Activated CD8-positive, alpha-beta T cell treated with anti-CD3 and anti-CD28 coated beads, Interleukin-2, amount 10 ng/mL, durations not matched to agents 7 days and 5 days (primary cell): ENCODE measurements at regions of chr9 and their contacts with region 1.

Region 1: DNA sequence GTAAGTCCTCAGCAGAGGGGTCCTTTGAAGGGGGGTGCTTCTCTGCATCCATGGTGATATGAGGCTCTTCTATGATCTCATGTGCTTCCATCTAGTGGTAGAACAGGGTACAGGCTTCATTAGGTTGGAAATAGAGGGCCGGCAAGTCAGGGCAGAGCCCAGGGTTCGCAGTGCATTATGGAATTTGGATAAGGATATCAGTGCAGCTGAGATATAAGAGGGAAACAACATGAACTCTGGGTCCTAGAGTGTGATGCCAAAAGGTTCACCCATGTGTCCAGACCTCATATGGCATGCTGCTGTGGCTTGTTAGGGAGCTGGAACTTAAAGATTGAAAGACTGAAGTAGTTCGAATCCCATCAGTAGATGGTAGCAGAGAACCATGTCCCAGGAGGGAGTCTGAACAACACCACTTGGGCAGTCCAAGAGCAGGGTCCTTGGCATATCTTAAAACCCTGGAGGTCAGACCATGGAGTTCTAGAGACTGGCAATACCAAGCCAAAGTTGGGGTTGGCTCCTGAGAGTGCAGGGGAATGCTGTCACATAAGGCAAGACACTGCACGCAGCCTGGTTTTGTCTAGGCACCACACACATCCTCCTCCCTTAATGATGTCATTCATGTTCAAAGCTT is 2.3 kb downstream of the FAM221B start:
- DNase-seq: peak; percentile 58
- ATAC-seq: peak; percentile 29
- H3K4me3 Mint-ChIP-seq: no peak overlapping the region
- H3K27ac Mint-ChIP-seq: no peak overlapping the region
- H3K4me1 Mint-ChIP-seq: peaks cover 27% of the 10 kb centered on the region
- H3K27me3 Mint-ChIP-seq: peaks cover 14% of the 10 kb centered on the region

Region 2: DNA sequence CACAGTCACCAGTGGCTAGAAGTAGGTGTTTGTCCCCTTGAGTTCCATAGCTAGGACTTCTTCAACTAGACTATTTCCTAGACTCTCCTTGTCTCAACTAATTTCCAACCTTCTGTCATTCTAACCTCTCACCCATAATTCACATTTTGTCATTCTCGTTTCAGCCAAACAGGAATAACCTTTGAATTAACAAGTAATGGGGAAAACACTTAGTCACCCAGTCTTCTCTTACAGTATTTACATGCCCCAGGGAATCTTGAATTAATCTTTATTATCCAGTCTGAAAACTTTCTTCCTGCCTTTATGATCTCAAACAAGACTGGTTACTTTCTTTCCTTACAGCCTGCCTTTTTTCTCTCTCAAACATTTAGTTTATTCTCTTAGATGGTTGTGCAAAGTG is 399.6 kb before region 1 on chr9:
- CTCF ChIA-PET with region 1: no interaction called
- POLR2A ChIA-PET with region 1: no interaction called
- DNase-seq: no peak
- ATAC-seq: no peak
- H3K4me3 Mint-ChIP-seq: no peak overlapping the region
- H3K27ac Mint-ChIP-seq: no peak overlapping the region
- H3K4me1 Mint-ChIP-seq: no peaks in the 10 kb centered on the region
- H3K27me3 Mint-ChIP-seq: peaks cover 36% of the 10 kb centered on the region

Region 3: GRCh38 chr9:35756275-35757225 is 69.6 kb before region 1 on chr9:
- CTCF ChIA-PET with region 1: interaction called, 11 read pairs
- POLR2A ChIA-PET with region 1: no interaction called
- DNase-seq: peak; percentile 87
- ATAC-seq: peak; percentile 87
- H3K4me3 Mint-ChIP-seq: peak overlapping the region; percentile 87
- H3K27ac Mint-ChIP-seq: peak overlapping the region; percentile 94
- H3K4me1 Mint-ChIP-seq: peaks cover 35% of the 10 kb centered on the region
- H3K27me3 Mint-ChIP-seq: no peaks in the 10 kb centered on the region

Region 4: DNA sequence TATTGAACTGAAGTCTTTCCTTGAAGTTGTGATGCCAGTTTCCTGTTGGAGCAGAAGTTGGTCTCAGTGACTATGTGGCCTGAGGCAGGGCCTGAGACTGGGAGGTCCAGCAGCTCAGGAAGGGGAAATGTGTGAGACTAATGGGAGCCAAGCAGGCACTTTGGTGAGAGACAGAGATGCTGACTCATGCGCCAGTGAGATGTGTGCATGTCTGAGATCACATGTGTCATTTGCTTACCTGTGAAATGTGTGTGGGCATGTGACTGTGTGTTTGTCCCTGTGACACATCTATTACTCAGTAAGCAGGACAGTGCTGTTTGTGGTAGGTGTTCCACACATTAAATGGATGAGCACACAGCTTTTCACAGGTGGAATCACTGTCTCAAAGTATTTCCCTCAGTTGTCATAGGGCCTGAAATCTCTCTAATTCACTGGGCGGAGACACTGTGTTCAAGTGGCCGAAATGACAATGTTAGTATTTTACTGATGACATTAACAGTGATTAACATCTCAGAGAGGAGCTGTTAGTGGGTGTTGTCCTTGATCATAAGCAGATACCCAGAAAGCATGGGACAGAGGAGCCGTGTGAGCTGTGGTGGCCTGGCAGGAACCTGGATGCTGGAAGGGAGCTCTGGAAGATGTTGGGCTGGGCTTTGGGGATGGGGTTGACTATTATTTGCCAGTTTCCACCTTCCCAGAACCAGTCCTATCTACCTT is 27.4 kb before region 1 on chr9:
- CTCF ChIA-PET with region 1: interaction called, 22 read pairs
- POLR2A ChIA-PET with region 1: no interaction called
- DNase-seq: peak; percentile 35
- ATAC-seq: no peak
- H3K4me3 Mint-ChIP-seq: no peak overlapping the region
- H3K27ac Mint-ChIP-seq: peak overlapping the region; percentile 8
- H3K4me1 Mint-ChIP-seq: peaks cover 30% of the 10 kb centered on the region
- H3K27me3 Mint-ChIP-seq: no peaks in the 10 kb centered on the region

Region 5: GRCh38 chr9:35814841-35815543 is 11.2 kb before region 1 on chr9 and contains the start of gene HINT2:
- CTCF ChIA-PET with region 1: interaction called, 42 read pairs
- POLR2A ChIA-PET with region 1: interaction called, 5 read pairs
- DNase-seq: peak; percentile 100
- ATAC-seq: peak; percentile 82
- H3K4me3 Mint-ChIP-seq: peak within 1 kb of the TSS; percentile 91
- H3K27ac Mint-ChIP-seq: peak within 1 kb of the TSS; percentile 95
- H3K4me1 Mint-ChIP-seq: peaks cover 47% of the 10 kb centered on the region
- H3K27me3 Mint-ChIP-seq: peaks cover 14% of the 10 kb centered on the region
- total RNA-seq, gene HINT2: 74.7 to 76.8 TPM

Region 6: GRCh38 chr9:35903049-35903448 is 76.9 kb after region 1 on chr9:
- CTCF ChIA-PET with region 1: interaction called, 11 read pairs
- POLR2A ChIA-PET with region 1: no interaction called
- DNase-seq: peak; percentile 64
- ATAC-seq: peak; percentile 74
- H3K4me3 Mint-ChIP-seq: no peak overlapping the region
- H3K27ac Mint-ChIP-seq: no peak overlapping the region
- H3K4me1 Mint-ChIP-seq: peaks cover 10% of the 10 kb centered on the region
- H3K27me3 Mint-ChIP-seq: peaks cover 10% of the 10 kb centered on the region

Region 7: GRCh38 chr9:36039696-36040095 is 213.5 kb after region 1 on chr9:
- CTCF ChIA-PET with region 1: no interaction called
- POLR2A ChIA-PET with region 1: no interaction called
- DNase-seq: no peak
- ATAC-seq: no peak
- H3K4me3 Mint-ChIP-seq: no peak overlapping the region
- H3K27ac Mint-ChIP-seq: no peak overlapping the region
- H3K4me1 Mint-ChIP-seq: peaks cover 59% of the 10 kb centered on the region
- H3K27me3 Mint-ChIP-seq: peaks cover 4% of the 10 kb centered on the region